Activated CD8-positive, alpha-beta memory T cell treated with anti-CD3 and anti-CD28 coated beads, Interleukin-2, amount 10 ng/mL, durations not matched to agents 7 days and 5 days (primary cell): ENCODE measurements at regions of chr6 and their contacts with region 1.

Region 1: DNA sequence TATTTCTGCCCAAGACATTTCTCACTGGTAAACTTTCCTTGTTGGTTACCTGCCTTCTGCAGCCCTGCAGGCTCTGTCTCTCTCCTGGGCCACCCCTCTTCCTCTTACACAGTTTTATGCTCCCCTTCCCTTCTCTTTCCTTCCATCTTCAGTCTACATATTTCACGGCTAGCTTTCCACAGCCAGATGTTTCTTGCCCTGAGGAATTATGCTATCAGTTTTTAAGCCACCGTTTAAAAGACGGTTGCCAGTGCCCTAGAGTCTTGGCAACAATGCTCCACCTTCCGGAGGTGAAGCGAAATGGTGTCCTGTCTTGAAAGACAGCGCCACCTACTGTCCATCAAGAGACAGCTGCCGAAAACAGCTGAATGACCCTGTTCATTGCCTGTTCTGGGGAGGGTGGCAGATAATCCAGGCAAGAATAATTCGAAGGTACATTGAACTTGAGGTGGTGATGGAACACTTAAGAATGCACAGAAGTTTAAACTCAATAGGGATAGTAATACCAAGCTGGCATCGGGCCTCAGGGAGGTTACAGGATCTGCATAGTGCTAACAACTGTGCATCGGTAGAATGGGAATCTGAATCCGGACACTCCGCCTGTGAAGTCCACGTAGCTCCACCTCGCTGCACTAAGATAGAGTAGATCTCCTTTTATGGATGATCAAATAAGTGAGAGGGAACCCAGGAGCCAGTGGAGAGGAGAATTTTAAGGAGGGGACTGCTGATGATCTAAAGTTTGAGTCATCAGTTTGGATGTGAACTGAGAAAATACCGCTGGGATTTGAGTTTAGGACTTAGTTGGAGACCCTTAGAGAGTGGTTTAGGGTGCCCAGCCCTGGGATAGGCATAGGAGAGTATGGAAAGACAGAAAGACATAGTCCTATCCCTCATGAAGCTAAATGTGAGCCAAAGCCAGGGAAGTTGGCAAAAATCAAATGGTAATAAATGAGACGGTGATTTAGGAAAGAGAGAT is 4.8 kb upstream of the TRIM40 start:
- DNase-seq: peak; percentile 81
- ATAC-seq: peak; percentile 97
- H3K4me3 Mint-ChIP-seq: no peak overlapping the region
- H3K27ac Mint-ChIP-seq: peak overlapping the region; percentile 5
- H3K4me1 Mint-ChIP-seq: peaks cover 19% of the 10 kb centered on the region
- H3K27me3 Mint-ChIP-seq: peaks cover 84% of the 10 kb centered on the region

Region 2: GRCh38 chr6:30066577-30067459 is 64.4 kb before region 1 on chr6 and contains the start of gene PPP1R11:
- CTCF ChIA-PET with region 1: interaction called, 10 read pairs
- DNase-seq: peak; percentile 100
- ATAC-seq: peak; percentile 97
- H3K4me3 Mint-ChIP-seq: peak within 1 kb of the TSS; percentile 96
- H3K27ac Mint-ChIP-seq: peak within 1 kb of the TSS; percentile 96
- H3K4me1 Mint-ChIP-seq: peaks cover 57% of the 10 kb centered on the region
- H3K27me3 Mint-ChIP-seq: peaks cover 15% of the 10 kb centered on the region
- total RNA-seq, gene PPP1R11: 49.5 to 50.4 TPM

Region 3: GRCh38 chr6:30091577-30092381 is 39.4 kb before region 1 on chr6:
- CTCF ChIA-PET with region 1: interaction called, 12 read pairs
- DNase-seq: no peak
- ATAC-seq: no peak
- H3K4me3 Mint-ChIP-seq: no peak overlapping the region
- H3K27ac Mint-ChIP-seq: no peak overlapping the region
- H3K4me1 Mint-ChIP-seq: no peaks in the 10 kb centered on the region
- H3K27me3 Mint-ChIP-seq: peaks cover 80% of the 10 kb centered on the region

Region 4: GRCh38 chr6:30102970-30103874 is 28.0 kb before region 1 on chr6:
- CTCF ChIA-PET with region 1: interaction called, 234 read pairs
- DNase-seq: peak; percentile 90
- ATAC-seq: peak; percentile 80
- H3K4me3 Mint-ChIP-seq: peak overlapping the region; percentile 62
- H3K27ac Mint-ChIP-seq: no peak overlapping the region
- H3K4me1 Mint-ChIP-seq: peaks cover 37% of the 10 kb centered on the region
- H3K27me3 Mint-ChIP-seq: peaks cover 65% of the 10 kb centered on the region

Region 5: DNA sequence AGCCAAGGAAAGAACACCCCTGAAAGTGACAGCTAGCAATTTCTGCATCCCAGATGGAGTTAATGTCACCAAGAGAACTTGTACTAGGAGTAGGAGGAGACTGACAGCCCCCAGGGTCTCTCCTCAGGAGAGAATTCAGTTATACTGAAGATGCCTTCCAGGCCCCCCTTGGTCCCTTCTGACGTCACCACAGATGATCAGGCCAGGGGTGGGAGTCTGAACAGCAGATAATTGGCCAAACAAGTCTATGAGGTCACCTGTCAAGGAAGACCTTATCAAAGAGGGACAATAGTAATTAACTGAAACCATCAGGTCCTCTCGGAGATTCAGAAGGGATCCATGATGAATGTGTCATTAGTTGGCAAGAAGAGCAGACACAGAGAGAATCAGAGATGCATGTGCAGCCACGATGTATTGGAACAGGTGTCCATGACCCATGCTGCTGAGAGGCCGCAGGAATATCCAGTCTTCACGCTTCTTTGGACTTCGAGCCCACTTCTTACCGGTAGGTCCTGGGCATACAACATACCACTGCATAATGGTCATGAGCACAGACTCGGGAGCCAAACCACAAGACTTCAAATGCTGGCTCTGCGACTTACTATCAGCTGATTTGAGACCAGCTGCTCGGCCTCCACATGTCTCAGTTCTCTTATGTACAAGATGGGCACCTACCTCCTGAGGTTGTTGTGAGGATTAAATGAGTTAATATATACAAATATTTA is 19.7 kb after region 1 on chr6:
- CTCF ChIA-PET with region 1: interaction called, 12 read pairs
- DNase-seq: no peak
- ATAC-seq: no peak
- H3K4me3 Mint-ChIP-seq: no peak overlapping the region
- H3K27ac Mint-ChIP-seq: no peak overlapping the region
- H3K4me1 Mint-ChIP-seq: peaks cover 10% of the 10 kb centered on the region
- H3K27me3 Mint-ChIP-seq: peaks cover 45% of the 10 kb centered on the region